CD4-positive, alpha-beta T cell (primary cell): ENCODE measurements at regions of chr20 and their contacts with region 1.

Region 1: DNA sequence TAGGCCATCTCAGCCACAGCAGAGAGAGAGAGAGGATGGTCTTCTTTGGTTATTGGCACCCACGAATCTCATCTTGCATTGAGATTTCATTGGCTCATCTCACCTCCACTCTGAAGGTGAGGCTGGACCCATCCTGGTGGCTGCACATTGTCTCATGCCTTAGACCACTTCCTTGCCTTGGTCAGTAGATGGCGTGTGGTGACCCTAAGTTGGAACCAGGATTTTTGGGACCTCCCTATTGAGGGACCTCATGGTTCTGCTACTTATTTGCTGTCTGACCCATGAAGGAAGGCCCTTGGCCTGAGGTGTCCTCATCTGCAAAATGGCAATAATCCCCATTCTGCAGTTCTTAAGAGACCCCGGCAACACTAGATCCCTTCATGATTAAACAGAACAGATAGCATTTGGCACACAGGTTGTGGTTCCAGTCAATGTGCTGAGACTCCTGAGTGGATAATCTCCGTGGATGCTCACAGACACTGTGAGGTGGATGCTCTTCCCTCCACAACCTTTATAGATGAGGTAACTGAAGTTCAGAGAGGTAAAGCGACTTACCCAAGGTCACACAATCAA is 21.5 kb upstream of the AAR2 start:
- DNase-seq: peak in 4 of 14 experiments; percentile 12 to 38 (median 26)
- ATAC-seq: no peak
- H3K4me3 ChIP-seq: no peak overlapping the region
- H3K4me3 Mint-ChIP-seq: no peak overlapping the region
- H3K27ac ChIP-seq: no peak overlapping the region
- H3K27ac Mint-ChIP-seq: no peak overlapping the region
- H3K4me1 ChIP-seq: no peaks in the 10 kb centered on the region
- H3K4me1 Mint-ChIP-seq: no peaks in the 10 kb centered on the region
- H3K27me3 ChIP-seq: no peaks in the 10 kb centered on the region
- H3K27me3 Mint-ChIP-seq: no peaks in the 10 kb centered on the region
- CTCF ChIP-seq: peak; percentile 38

Region 2: GRCh38 chr20:36259177-36260061 is 44.6 kb after region 1 on chr20:
- CTCF ChIA-PET with region 1: no interaction called
- POLR2A ChIA-PET with region 1: no interaction called
- intact Hi-C with region 1: loop called in 1 of 2 experiments (anchors 5 kb)
- DNase-seq: no peak
- ATAC-seq: no peak
- H3K4me3 ChIP-seq: no peak overlapping the region
- H3K4me3 Mint-ChIP-seq: no peak overlapping the region
- H3K27ac ChIP-seq: no peak overlapping the region
- H3K27ac Mint-ChIP-seq: no peak overlapping the region
- H3K4me1 ChIP-seq: no peaks in the 10 kb centered on the region
- H3K4me1 Mint-ChIP-seq: no peaks in the 10 kb centered on the region
- H3K27me3 ChIP-seq: no peaks in the 10 kb centered on the region
- H3K27me3 Mint-ChIP-seq: no peaks in the 10 kb centered on the region
- CTCF ChIP-seq: no peak

Region 3: GRCh38 chr20:36367907-36368799 is 153.4 kb after region 1 on chr20:
- CTCF ChIA-PET with region 1: no interaction called
- POLR2A ChIA-PET with region 1: no interaction called
- intact Hi-C with region 1: no loop called
- DNase-seq: no peak
- ATAC-seq: no peak
- H3K4me3 ChIP-seq: no peak overlapping the region
- H3K4me3 Mint-ChIP-seq: no peak overlapping the region
- H3K27ac ChIP-seq: no peak overlapping the region
- H3K27ac Mint-ChIP-seq: no peak overlapping the region
- H3K4me1 ChIP-seq: no peaks in the 10 kb centered on the region
- H3K4me1 Mint-ChIP-seq: no peaks in the 10 kb centered on the region
- H3K27me3 ChIP-seq: peaks cover 0 to 14% of the 10 kb centered on the region in 2 experiments
- H3K27me3 Mint-ChIP-seq: peaks cover 8% of the 10 kb centered on the region
- CTCF ChIP-seq: no peak